ENCODE measurements at regions of chr22 and their contacts with region 1.

Region 1: GRCh38 chr22:24803011-24803542 is 2.9 kb upstream of the SGSM1 start:
- DNase-seq: peak; percentile 38
- H3K4me3 ChIP-seq: no peak overlapping the region
- H3K27ac ChIP-seq: no peak overlapping the region
- H3K4me1 ChIP-seq: peaks cover 2% of the 10 kb centered on the region
- H3K27me3 ChIP-seq: peaks cover 0 to 2% of the 10 kb centered on the region in 2 experiments
- CTCF ChIP-seq: peak; percentile 80 to 91
- POLR2A ChIP-seq: no peak

Region 2: DNA sequence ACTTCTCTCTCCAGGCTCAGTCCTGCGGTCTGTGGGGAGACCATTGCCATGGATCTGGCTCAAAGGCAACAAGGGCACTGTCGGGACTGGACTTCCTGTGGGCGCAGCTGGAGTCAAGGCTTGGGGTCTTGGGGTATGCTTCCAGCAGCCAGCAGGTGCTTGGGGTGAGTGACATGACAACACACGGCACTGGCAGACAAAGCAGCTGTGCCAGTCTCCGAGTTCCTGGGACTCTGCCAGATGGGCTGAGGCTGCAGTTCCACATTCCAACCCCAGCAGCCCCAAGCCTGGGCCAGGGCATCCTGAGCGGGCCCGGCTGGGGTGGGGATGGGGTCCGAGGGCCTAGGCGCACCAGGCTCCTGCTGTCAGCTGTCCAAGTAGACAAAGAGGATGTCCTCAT is 260.4 kb before region 1 on chr22:
- CTCF ChIA-PET with region 1: no interaction called
- POLR2A ChIA-PET with region 1: no interaction called
- dilution Hi-C with region 1: no loop called
- intact Hi-C with region 1: no loop called
- DNase-seq: no peak
- H3K4me3 ChIP-seq: no peak overlapping the region
- H3K27ac ChIP-seq: no peak overlapping the region
- H3K4me1 ChIP-seq: peaks cover 3% of the 10 kb centered on the region
- H3K27me3 ChIP-seq: no peaks in the 10 kb centered on the region
- CTCF ChIP-seq: no peak
- POLR2A ChIP-seq: no peak

Region 3: GRCh38 chr22:24688256-24688655 is 114.8 kb before region 1 on chr22:
- CTCF ChIA-PET with region 1: no interaction called
- POLR2A ChIA-PET with region 1: no interaction called
- dilution Hi-C with region 1: no loop called
- intact Hi-C with region 1: no loop called
- DNase-seq: no peak
- H3K4me3 ChIP-seq: no peak overlapping the region
- H3K27ac ChIP-seq: no peak overlapping the region
- H3K4me1 ChIP-seq: peaks cover under 1% of the 10 kb centered on the region
- H3K27me3 ChIP-seq: peaks cover 0 to 19% of the 10 kb centered on the region in 2 experiments
- CTCF ChIP-seq: no peak
- POLR2A ChIP-seq: no peak

Region 4: DNA sequence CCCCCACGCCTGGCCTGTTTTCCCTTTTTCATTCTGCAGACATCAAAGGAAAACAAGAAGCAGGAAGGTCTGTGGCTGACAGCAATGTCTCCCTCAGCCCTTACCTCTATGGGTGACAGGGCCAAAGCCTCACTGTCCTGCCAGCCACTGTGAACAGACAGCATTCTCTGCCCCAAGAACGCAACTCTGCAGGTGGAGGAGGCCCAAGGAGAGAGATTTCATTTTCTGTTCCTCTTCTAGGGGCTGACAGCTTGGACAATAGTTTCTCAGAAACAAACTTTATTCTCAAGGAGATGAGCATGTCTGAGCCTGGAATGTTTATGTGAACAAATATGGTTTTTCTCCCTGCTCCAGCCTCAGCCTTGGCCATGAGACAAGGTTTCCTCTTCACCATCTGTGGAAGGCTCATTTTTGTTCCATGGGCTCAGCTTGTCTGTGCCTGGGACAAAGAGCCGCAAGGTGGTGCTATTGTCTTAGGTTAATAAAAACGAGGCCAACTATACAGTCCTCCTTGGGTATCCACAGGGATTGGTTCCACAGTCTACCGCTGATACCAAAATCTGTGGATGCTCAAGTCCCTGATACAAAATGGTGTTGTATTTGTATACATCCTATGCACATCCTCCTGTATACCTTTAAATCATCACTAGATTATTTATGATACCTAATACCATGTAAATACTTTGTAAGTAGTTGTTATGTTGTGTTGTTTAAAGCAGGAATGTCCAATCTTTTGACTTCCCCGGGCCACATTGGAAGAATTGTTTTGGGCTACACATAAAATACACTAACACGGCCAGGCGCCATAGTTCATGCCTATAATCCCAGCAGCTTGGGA is 34.3 kb before region 1 on chr22:
- CTCF ChIA-PET with region 1: interaction called, 28 read pairs
- POLR2A ChIA-PET with region 1: no interaction called
- dilution Hi-C with region 1: no loop called
- intact Hi-C with region 1: loop called (anchors 5 kb)
- DNase-seq: peak; percentile 49
- H3K4me3 ChIP-seq: no peak overlapping the region
- H3K27ac ChIP-seq: no peak overlapping the region
- H3K4me1 ChIP-seq: no peaks in the 10 kb centered on the region
- H3K27me3 ChIP-seq: peaks cover 0 to 3% of the 10 kb centered on the region in 2 experiments
- CTCF ChIP-seq: peak; percentile 60 to 67
- POLR2A ChIP-seq: no peak

Region 5: GRCh38 chr22:24812950-24813775 is 10.1 kb after region 1 on chr22:
- CTCF ChIA-PET with region 1: interaction called, 25 read pairs
- POLR2A ChIA-PET with region 1: no interaction called
- dilution Hi-C with region 1: no loop called
- intact Hi-C with region 1: no loop called
- DNase-seq: peak; percentile 44
- H3K4me3 ChIP-seq: no peak overlapping the region
- H3K27ac ChIP-seq: no peak overlapping the region
- H3K4me1 ChIP-seq: peaks cover 14% of the 10 kb centered on the region
- H3K27me3 ChIP-seq: peaks cover 0 to 3% of the 10 kb centered on the region in 2 experiments
- CTCF ChIP-seq: no peak
- POLR2A ChIP-seq: no peak

Region 6: GRCh38 chr22:24834845-24835570 is 31.9 kb after region 1 on chr22:
- CTCF ChIA-PET with region 1: interaction called, 10 read pairs
- POLR2A ChIA-PET with region 1: no interaction called
- dilution Hi-C with region 1: no loop called
- intact Hi-C with region 1: no loop called
- DNase-seq: peak; percentile 26
- H3K4me3 ChIP-seq: no peak overlapping the region
- H3K27ac ChIP-seq: no peak overlapping the region
- H3K4me1 ChIP-seq: no peaks in the 10 kb centered on the region
- H3K27me3 ChIP-seq: peaks cover 2 to 3% of the 10 kb centered on the region in 2 experiments
- CTCF ChIP-seq: peak; percentile 33 to 48
- POLR2A ChIP-seq: no peak

Region 7: GRCh38 chr22:24883432-24883831 is 80.4 kb after region 1 on chr22:
- CTCF ChIA-PET with region 1: interaction called, 10 read pairs
- POLR2A ChIA-PET with region 1: no interaction called
- dilution Hi-C with region 1: no loop called
- intact Hi-C with region 1: no loop called
- DNase-seq: no peak
- H3K4me3 ChIP-seq: no peak overlapping the region
- H3K27ac ChIP-seq: no peak overlapping the region
- H3K4me1 ChIP-seq: no peaks in the 10 kb centered on the region
- H3K27me3 ChIP-seq: peaks cover 0 to 3% of the 10 kb centered on the region in 2 experiments
- CTCF ChIP-seq: no peak
- POLR2A ChIP-seq: no peak

Region 8: DNA sequence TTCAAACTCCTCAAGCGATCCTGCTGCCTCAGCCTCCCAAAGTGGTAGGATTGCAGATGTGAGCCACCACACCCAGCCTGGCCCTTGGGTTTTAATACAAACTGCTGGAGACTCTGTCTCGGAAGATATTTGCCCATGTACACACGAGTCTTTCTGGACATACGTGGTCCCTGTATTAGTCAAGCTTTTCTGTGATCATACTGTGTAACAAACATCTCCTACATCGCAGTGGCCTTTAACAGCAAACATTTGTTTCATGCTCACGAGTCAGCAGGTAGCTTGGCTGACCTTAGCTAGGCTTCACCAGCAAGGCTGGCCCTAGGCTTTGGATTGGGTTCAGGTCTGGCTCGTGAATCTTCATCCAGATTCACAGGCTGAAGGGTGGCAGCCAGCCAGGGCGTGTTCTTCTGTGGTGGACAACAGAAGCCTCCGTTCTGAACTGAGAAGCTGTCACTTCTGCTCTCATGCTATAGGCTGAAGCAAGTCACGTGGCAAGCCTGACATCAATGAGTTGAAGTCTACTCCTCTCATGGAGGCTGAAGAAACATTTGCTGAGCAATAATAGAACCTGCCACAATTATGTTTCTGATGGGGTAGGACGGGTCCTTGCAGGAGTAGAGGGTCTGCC is 158.3 kb after region 1 on chr22:
- CTCF ChIA-PET with region 1: no interaction called
- POLR2A ChIA-PET with region 1: no interaction called
- dilution Hi-C with region 1: no loop called
- intact Hi-C with region 1: no loop called
- DNase-seq: no peak
- H3K4me3 ChIP-seq: no peak overlapping the region
- H3K27ac ChIP-seq: no peak overlapping the region
- H3K4me1 ChIP-seq: peaks cover 16% of the 10 kb centered on the region
- H3K27me3 ChIP-seq: no peaks in the 10 kb centered on the region
- CTCF ChIP-seq: no peak
- POLR2A ChIP-seq: no peak

Region 9: GRCh38 chr22:25137577-25138525 is 334.8 kb after region 1 on chr22:
- CTCF ChIA-PET with region 1: no interaction called
- POLR2A ChIA-PET with region 1: no interaction called
- dilution Hi-C with region 1: no loop called
- intact Hi-C with region 1: no loop called
- DNase-seq: no peak
- H3K4me3 ChIP-seq: no peak overlapping the region
- H3K27ac ChIP-seq: no peak overlapping the region
- H3K4me1 ChIP-seq: peaks cover 29% of the 10 kb centered on the region
- H3K27me3 ChIP-seq: no peaks in the 10 kb centered on the region
- CTCF ChIP-seq: no peak
- POLR2A ChIP-seq: no peak